Activated CD8-positive, alpha-beta memory T cell treated with anti-CD3 and anti-CD28 coated beads, Interleukin-2, amount 10 ng/mL, durations not matched to agents 7 days and 5 days (primary cell): ENCODE measurements at regions of chr3 and their contacts with region 1.

Region 1: DNA sequence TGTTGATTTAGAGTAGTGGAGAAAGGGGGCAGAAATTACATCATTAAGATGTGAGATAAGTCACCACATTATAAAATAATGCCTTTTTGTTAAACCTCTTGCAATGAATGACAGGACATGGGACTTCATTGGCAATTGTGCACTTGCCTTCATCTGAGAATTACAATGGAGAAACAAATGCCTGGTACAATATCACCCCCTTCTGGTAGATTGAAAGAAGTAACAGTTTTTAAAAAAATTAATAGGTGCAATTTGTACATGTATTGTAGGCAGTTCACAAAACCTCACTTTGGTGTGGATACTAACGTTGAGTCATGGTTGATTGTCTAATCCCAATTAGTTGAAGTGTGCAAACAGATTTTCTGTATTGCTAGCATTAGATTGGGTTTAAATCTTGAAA is 4.6 kb upstream of the P2RY14 start:
- DNase-seq: no peak
- ATAC-seq: peak; percentile 52
- H3K4me3 Mint-ChIP-seq: no peak overlapping the region
- H3K27ac Mint-ChIP-seq: peak overlapping the region; percentile 74
- H3K4me1 Mint-ChIP-seq: peaks cover 58% of the 10 kb centered on the region
- H3K27me3 Mint-ChIP-seq: no peaks in the 10 kb centered on the region

Region 2: GRCh38 chr3:151156618-151157216 is 126.2 kb before region 1 on chr3:
- CTCF ChIA-PET with region 1: interaction called, 15 read pairs
- DNase-seq: no peak
- ATAC-seq: peak; percentile 84
- H3K4me3 Mint-ChIP-seq: no peak overlapping the region
- H3K27ac Mint-ChIP-seq: no peak overlapping the region
- H3K4me1 Mint-ChIP-seq: peaks cover 3% of the 10 kb centered on the region
- H3K27me3 Mint-ChIP-seq: peaks cover 6% of the 10 kb centered on the region

Region 3: DNA sequence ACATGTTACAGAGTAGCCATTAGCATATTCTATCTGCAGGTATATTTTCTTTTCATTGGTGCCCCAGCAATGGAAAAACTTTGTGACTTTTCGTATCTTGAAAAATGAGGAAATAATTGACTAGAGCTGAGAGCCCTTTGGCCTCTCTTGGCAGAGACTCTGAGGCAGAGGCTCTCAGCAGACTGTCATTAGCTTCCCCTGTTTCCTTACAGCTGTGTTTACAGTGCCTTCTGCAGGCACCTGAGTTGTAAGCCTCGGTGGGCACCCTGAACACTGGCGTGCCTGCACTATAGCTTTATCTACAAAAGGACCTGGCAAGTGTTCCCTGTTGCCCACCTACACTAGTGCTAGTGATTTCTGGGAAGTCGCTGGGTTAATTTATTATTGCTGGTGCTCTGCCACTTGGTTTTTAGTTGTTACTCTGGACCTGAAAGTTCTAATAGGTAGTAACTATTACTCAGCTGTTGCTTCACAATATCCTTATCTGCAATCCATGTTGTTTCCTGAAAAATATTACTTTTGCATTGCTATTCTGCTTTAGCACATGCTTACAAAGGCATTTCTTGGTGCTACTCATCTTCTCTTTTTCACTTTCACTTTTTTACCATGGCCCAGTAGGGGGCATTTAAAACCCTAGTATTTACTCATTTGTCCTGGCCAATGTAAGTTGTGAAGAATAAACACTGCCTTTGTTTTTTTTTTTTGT is 72.1 kb before region 1 on chr3:
- CTCF ChIA-PET with region 1: interaction called, 17 read pairs
- DNase-seq: peak; percentile 57
- ATAC-seq: peak; percentile 46
- H3K4me3 Mint-ChIP-seq: peak overlapping the region; percentile 52
- H3K27ac Mint-ChIP-seq: peak overlapping the region; percentile 90
- H3K4me1 Mint-ChIP-seq: peaks cover 61% of the 10 kb centered on the region
- H3K27me3 Mint-ChIP-seq: no peaks in the 10 kb centered on the region

Region 4: DNA sequence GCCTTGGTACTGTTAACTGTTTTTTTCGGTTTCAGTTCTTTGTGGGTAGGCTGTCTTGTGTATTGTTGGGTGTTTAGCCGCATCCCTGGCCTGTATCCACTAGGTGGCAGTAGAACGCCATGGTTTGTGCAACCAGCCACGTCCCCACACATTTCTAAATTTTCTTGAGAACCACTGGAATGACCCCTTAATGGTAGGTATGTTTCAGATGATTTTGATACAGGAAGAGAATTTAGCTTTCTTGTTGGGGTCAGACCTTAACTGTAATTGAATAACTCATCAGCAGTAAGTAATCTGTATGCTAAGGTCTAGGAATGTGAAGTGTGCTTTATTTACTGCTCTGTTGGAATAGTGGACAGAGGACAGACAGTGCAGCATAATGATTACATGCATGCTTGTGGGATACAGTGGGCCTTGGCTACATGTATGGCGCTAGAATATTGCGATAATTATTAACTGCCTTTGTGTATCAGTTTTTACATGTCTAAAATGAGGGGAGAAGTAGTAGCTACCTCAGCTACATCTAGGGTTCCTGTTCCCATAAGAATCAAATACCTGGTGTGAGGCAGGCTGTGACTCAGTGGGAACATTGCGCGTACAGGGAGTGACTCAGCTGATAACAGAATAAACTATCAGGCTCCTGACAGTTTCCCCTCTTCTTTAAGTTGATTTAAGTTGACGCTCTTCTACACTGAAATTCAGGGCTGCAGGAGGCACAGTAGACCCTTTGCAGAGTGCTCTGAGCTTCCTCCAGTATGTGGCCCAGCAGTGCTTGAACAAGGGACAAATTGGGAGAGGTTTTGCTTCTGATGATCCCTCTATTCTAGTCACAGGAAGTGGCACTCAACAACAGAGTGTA is 54.9 kb before region 1 on chr3:
- CTCF ChIA-PET with region 1: interaction called, 222 read pairs
- DNase-seq: peak; percentile 89
- ATAC-seq: peak; percentile 89
- H3K4me3 Mint-ChIP-seq: peak overlapping the region; percentile 34
- H3K27ac Mint-ChIP-seq: peak overlapping the region; percentile 77
- H3K4me1 Mint-ChIP-seq: peaks cover 58% of the 10 kb centered on the region
- H3K27me3 Mint-ChIP-seq: no peaks in the 10 kb centered on the region

Region 5: GRCh38 chr3:151265866-151266265 is 17.1 kb before region 1 on chr3:
- CTCF ChIA-PET with region 1: interaction called, 11 read pairs
- DNase-seq: no peak
- ATAC-seq: no peak
- H3K4me3 Mint-ChIP-seq: no peak overlapping the region
- H3K27ac Mint-ChIP-seq: no peak overlapping the region
- H3K4me1 Mint-ChIP-seq: peaks cover 33% of the 10 kb centered on the region
- H3K27me3 Mint-ChIP-seq: no peaks in the 10 kb centered on the region

Region 6: DNA sequence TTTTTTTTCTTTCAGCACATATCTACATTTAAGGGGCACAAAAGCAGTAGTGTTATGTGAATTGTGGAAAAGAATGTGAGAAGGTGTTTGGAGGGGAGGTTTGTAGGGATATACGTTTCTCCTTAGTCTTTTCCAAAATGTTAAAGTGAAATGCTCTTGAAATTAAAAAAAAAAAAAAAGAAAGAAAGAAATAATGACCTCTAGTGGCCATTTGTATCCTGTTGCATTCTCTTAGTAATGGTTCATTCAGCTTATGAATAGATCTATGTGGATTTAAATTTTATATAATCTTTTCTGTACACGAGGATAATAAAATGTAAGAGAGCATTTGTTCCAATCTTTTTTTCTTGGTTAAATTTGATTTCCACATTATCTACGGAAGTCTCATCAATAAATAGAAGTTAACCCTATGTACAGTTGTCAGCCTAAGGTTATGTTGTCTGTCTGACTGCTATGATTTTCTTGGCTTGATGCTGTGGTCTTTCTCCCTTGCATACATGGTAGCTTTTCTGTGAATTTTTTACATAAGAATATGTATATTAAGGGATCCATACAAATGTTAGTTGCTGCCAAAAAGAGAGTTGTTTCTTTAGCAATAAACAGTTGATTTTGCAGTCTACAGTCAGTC is 44.8 kb after region 1 on chr3:
- CTCF ChIA-PET with region 1: interaction called, 15 read pairs
- DNase-seq: no peak
- ATAC-seq: no peak
- H3K4me3 Mint-ChIP-seq: no peak overlapping the region
- H3K27ac Mint-ChIP-seq: no peak overlapping the region
- H3K4me1 Mint-ChIP-seq: peaks cover 12% of the 10 kb centered on the region
- H3K27me3 Mint-ChIP-seq: peaks cover 2% of the 10 kb centered on the region

Region 7: GRCh38 chr3:151421938-151422337 is 139.0 kb after region 1 on chr3:
- CTCF ChIA-PET with region 1: no interaction called
- DNase-seq: no peak
- ATAC-seq: no peak
- H3K4me3 Mint-ChIP-seq: no peak overlapping the region
- H3K27ac Mint-ChIP-seq: no peak overlapping the region
- H3K4me1 Mint-ChIP-seq: peaks cover 7% of the 10 kb centered on the region
- H3K27me3 Mint-ChIP-seq: peaks cover 3% of the 10 kb centered on the region